ENCODE measurements at regions of chr4 and their contacts with region 1.

Region 1: GRCh38 chr4:94127707-94128328 is 79.8 kb upstream of the SMARCAD1 start:
- DNase-seq: peak; percentile 72
- H3K4me3 Mint-ChIP-seq: no peak overlapping the region
- H3K27ac Mint-ChIP-seq: no peak overlapping the region
- H3K4me1 Mint-ChIP-seq: no peaks in the 10 kb centered on the region
- H3K27me3 Mint-ChIP-seq: no peaks in the 10 kb centered on the region
- CTCF ChIP-seq: peak; percentile 58

Region 2: GRCh38 chr4:93994175-93994994 is 133.4 kb before region 1 on chr4:
- CTCF ChIA-PET with region 1: no interaction called
- POLR2A ChIA-PET with region 1: no interaction called
- intact Hi-C with region 1: loop called (anchors 10 kb)
- DNase-seq: no peak
- H3K4me3 Mint-ChIP-seq: no peak overlapping the region
- H3K27ac Mint-ChIP-seq: no peak overlapping the region
- H3K4me1 Mint-ChIP-seq: no peaks in the 10 kb centered on the region
- H3K27me3 Mint-ChIP-seq: no peaks in the 10 kb centered on the region
- CTCF ChIP-seq: no peak

Region 3: DNA sequence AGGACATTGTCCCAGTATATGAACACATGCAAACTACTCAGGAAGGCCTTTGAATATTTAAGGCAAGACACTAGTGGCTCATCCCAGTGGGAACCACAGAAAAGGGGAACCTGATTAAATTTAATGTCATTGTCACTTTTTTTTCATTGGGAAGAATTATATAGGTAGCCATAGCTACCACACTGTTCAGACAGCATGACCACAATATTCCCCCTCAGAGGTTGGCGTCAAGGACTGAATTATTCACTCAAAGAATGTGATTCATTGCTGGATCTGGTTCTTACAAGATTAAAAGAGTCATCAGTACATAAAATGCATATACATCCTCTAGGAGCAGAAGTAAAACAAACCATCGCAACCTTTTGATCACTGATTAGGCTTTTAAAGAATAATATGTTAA is 12.1 kb before region 1 on chr4:
- CTCF ChIA-PET with region 1: interaction called, 10 read pairs
- POLR2A ChIA-PET with region 1: no interaction called
- intact Hi-C with region 1: no loop called
- DNase-seq: no peak
- H3K4me3 Mint-ChIP-seq: no peak overlapping the region
- H3K27ac Mint-ChIP-seq: no peak overlapping the region
- H3K4me1 Mint-ChIP-seq: no peaks in the 10 kb centered on the region
- H3K27me3 Mint-ChIP-seq: no peaks in the 10 kb centered on the region
- CTCF ChIP-seq: no peak